Adrenal gland (tissue), 19 donors: ENCODE measurements at regions of chr19 and their contacts with region 1.

Region 1: DNA sequence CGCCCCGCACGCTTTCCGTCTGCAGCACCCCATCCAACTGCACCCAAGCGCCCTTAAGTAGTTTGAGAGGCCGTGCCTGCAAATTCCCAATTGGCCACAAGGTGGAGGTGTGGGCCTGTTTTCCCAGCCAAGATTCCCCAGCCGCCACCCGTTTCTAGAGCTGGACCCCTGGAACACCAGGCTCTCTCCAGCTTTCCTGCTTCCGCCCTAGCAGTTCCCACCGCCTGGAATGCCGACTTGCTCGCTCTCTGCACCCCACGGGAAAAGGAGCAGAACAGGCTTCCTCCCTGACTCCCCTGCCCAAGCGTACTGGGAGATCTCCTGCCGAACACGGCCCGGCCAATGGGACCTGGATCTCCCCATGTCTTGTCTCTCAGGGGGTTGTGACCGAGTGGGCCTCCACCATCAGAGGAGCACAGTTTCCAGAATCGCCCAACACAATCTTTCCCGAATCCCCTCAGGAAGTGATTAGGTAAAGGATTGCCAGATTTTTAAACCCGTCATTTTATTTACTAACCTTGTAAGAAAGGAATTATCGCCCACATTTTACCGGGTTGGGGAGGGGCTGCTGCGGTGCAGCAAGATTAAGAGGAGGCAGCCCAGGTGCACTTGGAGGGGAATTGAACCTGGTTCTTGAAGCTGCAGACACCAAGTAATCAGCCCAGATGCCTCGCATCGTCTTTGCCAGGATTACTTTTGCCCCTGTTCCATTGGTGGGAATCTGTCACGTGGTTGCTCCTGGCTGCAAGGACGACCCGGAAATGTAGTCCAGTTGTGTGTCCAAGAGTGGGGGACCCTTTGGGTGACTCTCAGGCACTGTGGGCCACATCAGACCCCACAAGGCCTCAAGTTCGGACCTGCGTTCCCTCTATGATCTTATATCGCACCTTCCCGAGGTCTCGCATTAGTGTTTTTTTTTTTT is 3.5 kb upstream of the NAPSA start:
- DNase-seq: peak; percentile 84 to 95 (median 88)
- H3K4me3 ChIP-seq: peak overlapping the region in 3 of 4 donors; percentile 51 to 85 (median 55)
- H3K27ac ChIP-seq: peak overlapping the region in 3 of 5 donors; percentile 40 to 75 (median 74)
- H3K4me1 ChIP-seq: no peaks in the 10 kb centered on the region
- H3K27me3 ChIP-seq: no peaks in the 10 kb centered on the region
- CTCF ChIP-seq: peak; percentile 83 to 94 (median 88)
- POLR2A ChIP-seq: no peak

Region 2: GRCh38 chr19:50008532-50008931 is 360.4 kb before region 1 on chr19:
- intact Hi-C with region 1: no loop called
- DNase-seq: peak in 1 of 7 donors; percentile 34
- H3K4me3 ChIP-seq: no peak overlapping the region
- H3K27ac ChIP-seq: no peak overlapping the region
- H3K4me1 ChIP-seq: peaks cover 9 to 10% of the 10 kb centered on the region in 2 donors
- H3K27me3 ChIP-seq: no peaks in the 10 kb centered on the region
- CTCF ChIP-seq: no peak
- POLR2A ChIP-seq: no peak

Region 3: DNA sequence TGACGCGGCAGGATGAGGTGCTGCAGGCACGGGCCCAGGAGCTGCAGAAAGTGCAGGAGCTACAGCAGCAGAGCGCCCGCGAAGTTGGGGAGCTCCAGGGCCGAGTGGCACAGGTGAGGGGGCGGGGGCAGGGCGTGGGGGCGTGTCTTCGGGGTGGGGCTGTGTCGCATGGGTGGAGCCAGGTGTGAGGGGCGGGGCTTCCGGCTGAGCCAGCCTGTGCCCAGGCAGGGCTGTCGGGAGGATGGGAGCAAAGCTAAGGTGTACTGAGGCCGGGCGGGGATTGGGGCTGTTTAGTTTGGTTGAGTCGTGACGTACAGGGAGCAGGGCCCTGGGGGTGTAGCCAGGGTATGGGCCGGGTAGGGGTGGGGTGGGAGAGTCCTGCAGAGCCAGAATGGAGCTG is 102.0 kb before region 1 on chr19:
- intact Hi-C with region 1: no loop called
- DNase-seq: no peak
- H3K4me3 ChIP-seq: no peak overlapping the region
- H3K27ac ChIP-seq: no peak overlapping the region
- H3K4me1 ChIP-seq: no peaks in the 10 kb centered on the region
- H3K27me3 ChIP-seq: no peaks in the 10 kb centered on the region
- CTCF ChIP-seq: no peak
- POLR2A ChIP-seq: no peak

Region 4: GRCh38 chr19:50414864-50415660 is 46.2 kb after region 1 on chr19:
- intact Hi-C with region 1: loop called (anchors 2 to 5 kb)
- DNase-seq: peak; percentile 60 to 86 (median 76)
- H3K4me3 ChIP-seq: no peak overlapping the region
- H3K27ac ChIP-seq: no peak overlapping the region
- H3K4me1 ChIP-seq: no peaks in the 10 kb centered on the region
- H3K27me3 ChIP-seq: peaks cover 25% of the 10 kb centered on the region
- CTCF ChIP-seq: peak; percentile 74 to 92 (median 82)
- POLR2A ChIP-seq: no peak

Region 5: DNA sequence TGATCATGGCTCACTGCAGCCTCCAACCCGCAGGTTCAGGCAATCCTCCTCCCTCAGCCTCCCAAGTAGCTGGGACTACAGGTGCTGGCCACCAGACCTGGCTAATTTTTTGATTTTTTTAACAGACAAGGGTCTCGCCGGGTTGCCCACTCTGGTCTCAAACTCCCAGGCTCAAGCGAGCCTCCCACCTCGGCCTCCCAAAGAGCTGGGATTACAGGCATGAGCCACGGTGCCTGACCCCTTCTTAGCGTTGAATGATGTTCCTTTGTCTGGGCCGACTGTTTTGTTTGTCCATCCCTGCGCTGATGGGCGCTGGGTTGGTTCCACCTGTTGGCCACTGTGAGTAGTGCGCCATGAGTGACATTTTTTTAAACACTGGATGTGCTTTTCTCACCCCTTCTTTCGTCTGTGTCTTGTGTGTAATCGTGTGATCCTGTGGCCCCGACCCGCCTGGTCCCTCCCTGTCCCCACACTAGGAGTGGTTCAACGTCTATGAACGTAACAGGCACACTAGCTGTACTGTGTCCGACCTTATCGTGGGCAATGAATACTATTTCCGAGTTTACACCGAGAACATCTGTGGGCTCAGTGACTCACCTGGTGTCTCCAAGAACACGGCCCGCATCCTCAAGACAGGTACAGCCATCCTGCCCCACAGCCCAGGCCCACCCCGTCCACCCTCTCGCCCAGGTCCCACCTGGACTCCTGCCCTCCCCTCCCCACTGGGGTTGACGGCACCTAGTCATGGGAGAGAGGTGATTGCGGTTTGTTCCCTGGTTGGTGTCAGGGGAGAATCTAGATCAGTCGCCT is 92.4 kb after region 1 on chr19:
- intact Hi-C with region 1: loop called (anchors 5 kb)
- DNase-seq: peak; percentile 43 to 82 (median 60)
- H3K4me3 ChIP-seq: no peak overlapping the region
- H3K27ac ChIP-seq: no peak overlapping the region
- H3K4me1 ChIP-seq: no peaks in the 10 kb centered on the region
- H3K27me3 ChIP-seq: peaks cover 10% of the 10 kb centered on the region
- CTCF ChIP-seq: peak; percentile 74 to 86 (median 82)
- POLR2A ChIP-seq: no peak

Region 6: DNA sequence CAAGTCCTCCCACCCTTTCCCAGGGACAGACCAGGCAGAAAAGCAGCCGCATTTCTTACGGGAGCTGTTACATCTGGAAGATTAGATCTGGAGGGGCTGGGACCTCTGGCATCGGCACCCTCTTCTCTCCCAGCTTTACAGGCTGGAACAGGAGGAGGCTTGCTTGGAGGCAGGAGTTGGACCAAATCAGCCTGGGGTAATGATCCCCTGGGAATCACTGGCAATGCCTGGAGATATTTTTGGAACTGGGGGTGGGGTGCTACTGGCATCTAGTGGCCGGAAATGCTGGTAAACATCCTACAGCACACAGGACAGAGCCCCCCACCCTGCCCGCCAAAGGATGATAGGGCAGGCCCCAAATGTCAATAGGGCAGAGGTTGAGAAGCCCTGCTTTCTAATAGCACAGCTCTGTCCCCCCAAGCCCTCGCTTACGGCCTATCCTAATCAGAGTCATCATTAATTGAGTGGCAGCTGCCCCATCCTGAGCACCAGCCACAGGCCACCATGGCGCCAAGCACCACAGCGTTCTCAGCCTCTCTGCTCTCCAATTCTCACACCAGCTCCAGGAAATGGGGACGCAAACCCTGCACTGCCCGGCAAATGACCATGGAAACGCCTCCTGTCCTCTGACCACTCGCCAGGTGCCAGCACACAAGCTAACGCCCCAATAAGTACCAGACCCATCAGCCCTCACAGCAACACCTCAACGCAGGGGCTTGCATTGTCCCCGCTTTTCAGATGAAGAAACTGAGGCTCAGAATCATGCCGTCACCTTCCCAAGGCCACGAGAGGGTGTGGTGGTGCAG is 178.7 kb after region 1 on chr19:
- intact Hi-C with region 1: no loop called
- DNase-seq: no peak
- H3K4me3 ChIP-seq: no peak overlapping the region
- H3K27ac ChIP-seq: no peak overlapping the region
- H3K4me1 ChIP-seq: no peaks in the 10 kb centered on the region
- H3K27me3 ChIP-seq: no peaks in the 10 kb centered on the region
- CTCF ChIP-seq: no peak
- POLR2A ChIP-seq: no peak

Region 7: DNA sequence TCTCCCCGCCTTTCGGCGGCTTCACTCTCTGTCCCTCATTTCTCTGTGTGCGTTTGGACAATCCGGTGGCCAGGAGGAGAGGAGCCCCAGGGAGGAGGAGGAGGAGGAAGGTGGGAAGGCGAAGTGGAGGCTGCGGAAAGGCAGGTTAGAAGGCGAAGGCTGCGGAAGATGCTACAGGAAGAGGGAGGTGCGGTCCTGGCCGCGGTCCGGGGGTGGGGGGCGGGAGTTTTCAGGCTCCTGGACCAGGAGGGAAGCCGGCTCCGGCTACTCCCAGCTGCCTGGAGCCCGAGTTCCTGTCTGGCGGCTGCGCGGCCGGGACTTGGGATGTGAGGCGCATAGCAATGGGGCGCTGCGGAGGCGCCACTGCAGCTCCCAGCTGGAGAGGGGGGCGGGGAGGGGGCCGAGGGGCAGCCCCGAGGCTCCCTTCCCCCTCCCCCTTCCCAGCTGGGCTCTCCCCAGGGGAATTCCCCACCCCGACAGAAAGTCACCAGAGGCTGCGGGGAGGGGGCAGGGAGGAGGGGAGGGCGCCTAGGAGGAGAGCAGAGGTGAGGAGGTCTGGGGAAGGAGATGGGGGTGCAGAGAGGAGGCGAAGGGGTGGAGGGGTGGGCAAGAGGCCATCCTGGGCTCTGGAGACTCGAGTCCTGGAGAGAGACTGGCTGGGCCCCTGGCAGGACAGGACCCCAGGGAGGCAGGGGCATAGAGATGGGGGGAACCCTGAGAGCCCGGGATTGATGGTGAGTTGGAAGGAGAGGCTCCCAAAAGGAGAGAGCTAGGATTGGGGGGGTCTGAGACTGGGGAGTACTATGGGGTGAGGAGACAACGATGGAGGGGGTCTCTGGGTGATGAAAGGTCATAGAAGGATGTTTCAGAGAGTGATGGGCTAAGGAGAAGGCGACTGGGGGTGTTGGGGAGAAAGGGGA is 197.3 kb after region 1 on chr19:
- intact Hi-C with region 1: no loop called
- DNase-seq: no peak
- H3K4me3 ChIP-seq: no peak overlapping the region
- H3K27ac ChIP-seq: no peak overlapping the region
- H3K4me1 ChIP-seq: no peaks in the 10 kb centered on the region
- H3K27me3 ChIP-seq: peaks cover 20% of the 10 kb centered on the region
- CTCF ChIP-seq: no peak
- POLR2A ChIP-seq: no peak